Activated CD4-positive, alpha-beta memory T cell treated with anti-CD3 and anti-CD28 coated beads for 36 hours (primary cell): ENCODE measurements at regions of chr6 and their contacts with region 1.

Region 1: DNA sequence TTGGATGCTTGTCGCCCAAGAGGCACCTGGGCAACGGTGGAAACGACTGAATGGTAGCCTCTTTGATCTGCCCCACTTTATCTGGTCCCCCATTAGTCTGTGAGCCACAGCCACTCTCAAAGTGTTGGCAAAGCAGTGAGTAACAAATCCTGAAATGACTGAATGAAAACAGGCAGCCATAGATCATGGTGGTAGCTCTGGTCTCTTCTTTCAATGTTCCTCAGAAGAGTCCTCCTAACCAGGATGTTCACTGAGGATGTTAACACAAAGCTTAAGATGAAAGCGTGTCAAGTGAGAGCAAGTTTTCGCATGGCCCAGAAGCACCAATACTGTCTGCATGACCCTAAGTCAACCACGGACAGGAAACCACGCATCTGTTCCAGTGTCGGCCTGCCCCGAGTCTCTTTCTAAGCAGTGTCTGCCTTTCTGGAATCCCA is 107.3 kb downstream of the IRF4 start:
- DNase-seq: peak; percentile 83
- H3K4me3 Mint-ChIP-seq: peak overlapping the region; percentile 61
- H3K27ac Mint-ChIP-seq: peak overlapping the region; percentile 93
- H3K4me1 Mint-ChIP-seq: peaks cover 83% of the 10 kb centered on the region
- H3K27me3 Mint-ChIP-seq: no peaks in the 10 kb centered on the region

Region 2: DNA sequence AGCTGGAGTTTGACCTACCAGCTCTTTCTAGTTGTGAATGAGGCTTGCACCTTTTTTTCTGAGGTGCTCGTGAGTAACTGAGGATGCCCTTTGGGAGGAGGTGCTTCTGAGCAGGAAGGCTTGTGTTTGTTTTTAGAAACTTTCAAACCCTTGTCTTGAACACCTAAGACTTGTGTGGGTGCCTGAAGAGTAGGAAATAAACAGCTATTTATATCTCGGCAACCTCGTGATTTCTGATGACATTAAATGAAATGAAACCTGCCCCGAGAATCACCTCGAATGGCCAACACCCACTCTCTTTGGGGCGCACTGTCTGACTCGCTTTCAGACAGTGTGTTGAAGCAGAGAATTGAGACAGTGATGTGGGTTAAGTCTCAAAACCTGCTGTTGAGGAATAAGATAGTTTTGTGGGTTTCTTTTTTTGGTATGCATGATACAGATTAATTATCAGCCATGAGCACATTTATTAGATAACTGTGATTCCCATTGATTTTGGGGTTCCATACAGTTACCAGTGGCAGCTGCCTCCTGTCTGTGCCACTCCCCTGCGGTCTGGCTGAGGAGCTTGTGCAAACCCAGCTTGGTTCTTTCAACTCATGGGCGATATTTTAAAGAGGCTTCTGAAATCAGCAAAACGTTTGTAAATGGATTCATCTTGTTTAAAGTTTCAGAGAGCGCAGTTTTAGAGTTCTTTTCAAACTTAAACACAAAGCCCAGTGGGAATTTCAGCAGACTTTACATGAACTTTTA is 98.9 kb before region 1 on chr6:
- CTCF ChIA-PET with region 1: interaction called, 3 read pairs
- POLR2A ChIA-PET with region 1: interaction called, 136 read pairs
- intact Hi-C with region 1: no loop called
- DNase-seq: peak; percentile 76
- H3K4me3 Mint-ChIP-seq: peak overlapping the region; percentile 64
- H3K27ac Mint-ChIP-seq: peak overlapping the region; percentile 88
- H3K4me1 Mint-ChIP-seq: peaks cover 94% of the 10 kb centered on the region
- H3K27me3 Mint-ChIP-seq: no peaks in the 10 kb centered on the region

Region 3: DNA sequence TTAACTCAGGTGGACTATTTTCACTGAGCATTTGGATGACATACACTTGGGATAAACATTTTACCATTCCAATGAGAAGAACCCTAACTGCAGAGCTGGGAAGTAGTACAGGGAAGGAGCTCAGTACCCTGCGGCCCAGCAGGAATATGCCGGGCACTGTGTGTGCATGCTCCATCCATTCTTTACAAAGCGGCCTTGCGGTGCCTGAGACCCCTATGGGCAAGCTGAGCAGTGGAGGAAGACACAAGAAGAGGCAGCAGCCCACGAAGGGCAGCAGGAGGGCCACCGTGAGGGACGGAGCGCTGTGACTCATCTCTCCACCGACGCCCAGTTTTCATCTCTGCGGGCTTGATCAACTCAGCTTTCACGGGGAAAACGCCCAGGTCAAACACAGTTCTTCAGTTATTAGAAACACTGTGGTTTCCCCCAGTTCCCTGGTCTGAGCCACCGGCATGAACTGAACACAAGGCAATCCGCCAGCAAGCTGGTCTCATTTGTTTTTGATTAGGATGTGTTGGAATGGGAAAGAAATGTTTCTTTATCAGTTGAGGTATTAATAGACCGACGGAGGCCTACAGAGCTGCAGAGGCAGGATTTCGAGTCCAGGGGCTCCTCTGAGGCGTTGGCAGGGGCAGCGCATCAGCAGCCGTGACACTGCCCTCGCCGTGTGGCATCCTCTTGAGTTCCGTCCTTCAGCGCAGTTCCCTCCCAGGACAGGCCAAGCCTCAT is 62.3 kb before region 1 on chr6:
- CTCF ChIA-PET with region 1: interaction called, 5 read pairs
- POLR2A ChIA-PET with region 1: interaction called, 10 read pairs
- intact Hi-C with region 1: no loop called
- DNase-seq: no peak
- H3K4me3 Mint-ChIP-seq: no peak overlapping the region
- H3K27ac Mint-ChIP-seq: no peak overlapping the region
- H3K4me1 Mint-ChIP-seq: peaks cover 43% of the 10 kb centered on the region
- H3K27me3 Mint-ChIP-seq: no peaks in the 10 kb centered on the region

Region 4: GRCh38 chr6:467671-468082 is 31.1 kb before region 1 on chr6:
- CTCF ChIA-PET with region 1: interaction called, 3 read pairs
- POLR2A ChIA-PET with region 1: interaction called, 4 read pairs
- intact Hi-C with region 1: loop called (anchors 2 kb)
- DNase-seq: peak; percentile 67
- H3K4me3 Mint-ChIP-seq: peak overlapping the region; percentile 16
- H3K27ac Mint-ChIP-seq: no peak overlapping the region
- H3K4me1 Mint-ChIP-seq: peaks cover 54% of the 10 kb centered on the region
- H3K27me3 Mint-ChIP-seq: peaks cover 34% of the 10 kb centered on the region

Region 5: GRCh38 chr6:514396-514973 is 15.7 kb after region 1 on chr6:
- CTCF ChIA-PET with region 1: no interaction called
- POLR2A ChIA-PET with region 1: interaction called, 14 read pairs
- intact Hi-C with region 1: loop called (anchors 1 kb)
- DNase-seq: peak; percentile 60
- H3K4me3 Mint-ChIP-seq: peak overlapping the region; percentile 17
- H3K27ac Mint-ChIP-seq: peak overlapping the region; percentile 85
- H3K4me1 Mint-ChIP-seq: peaks cover 64% of the 10 kb centered on the region
- H3K27me3 Mint-ChIP-seq: no peaks in the 10 kb centered on the region

Region 6: DNA sequence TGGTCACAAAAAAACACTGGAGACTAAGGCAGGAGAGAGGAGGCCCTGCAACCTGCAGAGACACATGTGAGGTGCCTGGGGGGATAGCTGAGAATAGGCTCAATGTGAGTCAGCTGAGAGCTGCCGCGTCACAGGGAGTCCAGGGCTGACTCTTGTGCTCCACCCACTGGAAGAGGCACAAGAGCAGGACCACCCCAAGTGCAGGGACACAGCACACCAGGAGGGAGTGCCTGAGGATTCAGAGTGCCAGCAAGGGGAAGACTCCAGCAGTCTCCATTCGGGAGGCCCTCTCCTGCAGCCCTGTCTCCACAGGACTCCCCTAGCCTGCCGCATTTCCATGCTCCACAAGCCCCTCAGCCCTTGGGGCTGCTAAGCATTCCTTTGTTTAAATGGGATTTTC is 52.6 kb after region 1 on chr6:
- CTCF ChIA-PET with region 1: interaction called, 5 read pairs
- POLR2A ChIA-PET with region 1: interaction called, 24 read pairs
- intact Hi-C with region 1: loop called (anchors 1 kb)
- DNase-seq: peak; percentile 68
- H3K4me3 Mint-ChIP-seq: no peak overlapping the region
- H3K27ac Mint-ChIP-seq: peak overlapping the region; percentile 97
- H3K4me1 Mint-ChIP-seq: peaks cover 69% of the 10 kb centered on the region
- H3K27me3 Mint-ChIP-seq: no peaks in the 10 kb centered on the region